ENCODE measurements at regions of chr11 and their contacts with region 1.

Region 1: GRCh38 chr11:44427432-44427831 is 117.5 kb upstream of the ALX4 start:
- DNase-seq: no peak
- H3K4me3 ChIP-seq: no peak overlapping the region
- CTCF ChIP-seq: peak; percentile 17

Region 2: DNA sequence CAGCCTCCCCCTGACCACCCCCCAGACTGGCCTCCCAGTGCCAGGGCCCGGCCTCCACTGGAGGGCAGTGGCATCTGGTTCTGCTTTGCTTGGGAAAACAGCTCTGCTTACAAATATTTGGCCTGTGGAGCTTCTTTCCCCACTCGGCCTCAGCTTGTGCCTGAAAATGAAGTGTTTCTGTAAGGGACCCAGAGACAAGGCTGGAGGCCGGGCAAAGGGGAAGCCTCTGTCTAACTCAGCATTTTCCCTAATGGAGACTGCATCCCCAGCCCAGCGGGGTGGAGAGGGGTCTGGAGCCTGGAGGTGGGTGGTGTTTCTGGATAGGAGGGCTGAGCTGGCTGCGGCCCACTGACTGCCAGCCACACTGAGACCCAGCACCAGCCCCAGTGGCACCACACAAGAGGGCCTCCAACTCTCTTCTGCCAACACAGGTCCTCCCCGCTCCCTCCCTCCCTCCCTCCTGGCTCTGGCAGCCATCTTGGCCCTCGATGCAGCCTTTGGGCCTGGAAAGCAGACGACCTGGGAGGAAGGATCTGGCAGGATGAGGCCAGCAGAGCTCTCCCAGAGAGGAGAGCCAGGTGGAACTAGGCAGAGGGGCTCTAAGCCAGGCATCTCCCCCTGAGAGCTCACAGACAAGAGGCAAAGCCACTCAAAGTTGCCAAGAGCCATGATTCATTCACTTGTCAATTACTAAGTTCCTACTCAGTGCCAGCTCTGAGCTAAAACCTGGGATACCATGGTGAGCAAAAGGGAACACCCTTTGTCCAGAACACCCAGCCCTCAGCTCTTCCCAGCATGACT is 60.9 kb after region 1 on chr11:
- in situ Hi-C with region 1: loop called (anchors 5 kb)
- DNase-seq: no peak
- H3K4me3 ChIP-seq: no peak overlapping the region
- CTCF ChIP-seq: no peak